ENCODE measurements at regions of chr3 and their contacts with region 1.

Region 1: GRCh38 chr3:183477801-183478456 is 49.5 kb upstream of the MCF2L2 start:
- DNase-seq: no peak
- ATAC-seq: no peak
- H3K4me3 ChIP-seq: no peak overlapping the region
- H3K27ac ChIP-seq: no peak overlapping the region
- H3K4me1 ChIP-seq: peaks cover 0 to 18% (median 9%) of the 10 kb centered on the region in 12 donors
- H3K27me3 ChIP-seq: no peaks in the 10 kb centered on the region
- CTCF ChIP-seq: no peak
- POLR2A ChIP-seq: no peak

Region 2: GRCh38 chr3:183555541-183556081 is 77.7 kb after region 1 on chr3 and contains the start of gene KLHL6:
- intact Hi-C with region 1: loop called in 4 of 10 experiments (anchors 2 to 10 kb)
- DNase-seq: peak; percentile 51 to 76 (median 64)
- ATAC-seq: peak; percentile 74 to 93 (median 82)
- H3K4me3 ChIP-seq: peak within 1 kb of the TSS in 10 of 12 donors; percentile 1 to 53 (median 31)
- H3K27ac ChIP-seq: peak within 1 kb of the TSS; percentile 2 to 88 (median 70)
- H3K4me1 ChIP-seq: peaks cover 0 to 43% (median 5%) of the 10 kb centered on the region in 12 donors
- H3K27me3 ChIP-seq: no peaks in the 10 kb centered on the region
- CTCF ChIP-seq: no peak
- POLR2A ChIP-seq: peak in 1 of 2 donors; percentile 22
- total RNA-seq, gene KLHL6: 0.67 to 8.1 (median 1.1) TPM

Region 3: DNA sequence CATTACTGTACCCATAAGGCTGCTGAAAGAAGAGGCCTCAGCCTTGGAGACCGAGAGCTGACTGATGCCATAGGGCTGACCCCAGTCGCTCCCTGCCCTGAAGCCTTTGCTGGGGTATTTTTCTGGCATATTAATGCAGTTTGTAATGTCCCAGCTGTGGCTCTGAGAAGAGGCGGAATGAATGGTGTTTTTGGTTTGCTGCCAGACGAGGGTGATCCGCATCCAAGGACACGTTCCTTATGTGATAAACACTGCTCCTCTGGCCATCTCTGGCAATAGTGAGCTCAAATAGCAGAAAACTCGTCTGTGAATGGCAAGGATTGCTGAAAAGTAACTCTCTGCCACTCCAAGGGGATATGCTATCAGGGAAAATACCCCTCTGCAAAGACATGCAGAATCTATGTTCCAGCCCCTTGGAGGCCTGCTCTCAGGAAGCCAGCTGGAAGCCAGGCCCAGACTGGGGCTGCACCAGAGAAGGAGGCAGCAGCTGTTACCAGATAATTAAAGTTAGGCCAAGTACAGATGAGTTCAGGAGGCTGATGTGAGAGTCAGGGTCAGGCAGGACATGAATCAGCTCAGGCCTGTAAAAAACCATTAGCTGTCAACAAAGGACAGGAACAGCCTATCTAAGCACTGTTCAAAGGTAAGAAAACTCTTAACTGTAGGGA is 106.5 kb after region 1 on chr3:
- intact Hi-C with region 1: loop called in 1 of 10 experiments (anchors 10 kb)
- DNase-seq: peak; percentile 54 to 76 (median 65)
- ATAC-seq: peak; percentile 65 to 86 (median 79)
- H3K4me3 ChIP-seq: no peak overlapping the region
- H3K27ac ChIP-seq: peak overlapping the region; percentile 59 to 85 (median 71)
- H3K4me1 ChIP-seq: peaks cover 3 to 69% (median 51%) of the 10 kb centered on the region in 12 donors
- H3K27me3 ChIP-seq: no peaks in the 10 kb centered on the region
- CTCF ChIP-seq: peak in 1 of 12 donors; percentile 9
- POLR2A ChIP-seq: no peak

Region 4: GRCh38 chr3:183878071-183878470 is 400.1 kb after region 1 on chr3:
- intact Hi-C with region 1: loop called in 2 of 10 experiments (anchors 10 kb)
- DNase-seq: peak in 1 of 5 donors; percentile 39
- ATAC-seq: peak in 3 of 4 donors; percentile 60 to 81 (median 80)
- H3K4me3 ChIP-seq: peak overlapping the region in 1 of 12 donors; percentile 21
- H3K27ac ChIP-seq: peak overlapping the region in 2 of 12 donors; percentile 20 to 88
- H3K4me1 ChIP-seq: peaks cover 0 to 82% (median 13%) of the 10 kb centered on the region in 12 donors
- H3K27me3 ChIP-seq: no peaks in the 10 kb centered on the region
- CTCF ChIP-seq: no peak
- POLR2A ChIP-seq: no peak

Region 5: DNA sequence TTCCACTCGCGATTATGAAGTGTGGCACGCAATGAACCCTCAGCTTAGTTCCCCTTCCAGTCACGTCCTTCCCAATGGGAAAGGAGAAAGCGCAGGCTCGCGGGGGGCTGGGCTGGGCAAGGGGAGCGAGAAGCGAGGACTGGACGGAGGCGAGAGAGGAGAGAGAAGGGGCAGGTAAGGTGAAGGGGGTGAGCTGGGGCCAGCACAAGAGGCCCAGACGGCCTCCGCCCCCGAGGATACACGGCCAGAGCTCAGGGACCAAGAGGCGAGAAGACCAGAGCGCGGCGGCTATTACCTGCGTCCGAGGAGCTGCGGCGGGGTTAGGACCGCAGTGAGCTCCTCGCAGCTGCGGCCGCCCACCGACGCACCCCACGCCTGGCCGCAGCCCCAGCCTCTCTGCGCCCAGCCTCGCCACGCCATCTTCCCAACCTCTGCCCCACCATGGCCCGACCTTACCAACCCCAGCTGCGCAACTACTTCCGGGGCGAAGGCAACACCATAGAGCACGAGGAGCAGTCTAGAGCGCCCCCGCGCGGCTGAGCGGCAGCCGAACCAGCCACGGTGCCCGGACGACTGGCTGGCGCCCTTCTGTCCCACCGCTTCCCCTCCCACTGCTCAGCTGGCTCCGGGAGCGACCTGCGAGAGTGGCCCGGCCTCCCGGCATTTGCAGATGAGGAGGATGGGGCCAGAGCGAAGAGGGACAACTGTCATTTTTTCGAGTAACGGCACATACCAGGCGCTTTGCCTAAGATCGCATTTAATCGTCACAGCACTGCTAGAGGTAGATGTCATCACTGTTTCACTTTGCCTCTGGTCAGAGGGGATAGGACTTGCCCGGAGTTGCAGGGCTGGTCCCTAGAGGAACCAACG is 406.7 kb after region 1 on chr3 and contains the start of gene PARL:
- intact Hi-C with region 1: loop called in 2 of 10 experiments (anchors 10 kb)
- DNase-seq: peak; percentile 95 to 98 (median 97)
- ATAC-seq: peak; percentile 100
- H3K4me3 ChIP-seq: peak within 1 kb of the TSS; percentile 54 to 99 (median 92)
- H3K27ac ChIP-seq: peak within 1 kb of the TSS; percentile 35 to 88 (median 82)
- H3K4me1 ChIP-seq: peaks cover 0 to 42% (median 23%) of the 10 kb centered on the region in 12 donors
- H3K27me3 ChIP-seq: no peaks in the 10 kb centered on the region
- CTCF ChIP-seq: peak; percentile 89 to 99 (median 96)
- POLR2A ChIP-seq: peak in 1 of 2 donors; percentile 57
- total RNA-seq, gene PARL: 37.9 to 62.2 (median 53.8) TPM